Esophagus squamous epithelium (tissue), 5 donors: ENCODE measurements at regions of chr19 and their contacts with region 1.

Region 1: GRCh38 chr19:10574462-10574861 is 5.7 kb upstream of the CDKN2D start:
- DNase-seq: no peak
- H3K4me3 ChIP-seq: no peak overlapping the region
- H3K27ac ChIP-seq: no peak overlapping the region
- H3K4me1 ChIP-seq: peaks cover 2 to 15% (median 9%) of the 10 kb centered on the region in 3 donors
- H3K27me3 ChIP-seq: no peaks in the 10 kb centered on the region
- CTCF ChIP-seq: no peak
- POLR2A ChIP-seq: no peak

Region 2: GRCh38 chr19:10403137-10404021 is 171.1 kb before region 1 on chr19 and contains the start of gene CDC37:
- intact Hi-C with region 1: loop called (anchors 10 kb)
- DNase-seq: peak; percentile 63
- H3K4me3 ChIP-seq: peak within 1 kb of the TSS; percentile 67 to 93 (median 70)
- H3K27ac ChIP-seq: peak within 1 kb of the TSS; percentile 74 to 90 (median 86)
- H3K4me1 ChIP-seq: peaks cover 27 to 92% (median 37%) of the 10 kb centered on the region in 3 donors
- H3K27me3 ChIP-seq: peaks cover 0 to 43% (median 2%) of the 10 kb centered on the region in 4 donors
- CTCF ChIP-seq: no peak
- POLR2A ChIP-seq: peak in 3 of 4 donors; percentile 17 to 86 (median 75)
- total RNA-seq, gene CDC37: 128 to 171 (median 152) TPM

Region 3: DNA sequence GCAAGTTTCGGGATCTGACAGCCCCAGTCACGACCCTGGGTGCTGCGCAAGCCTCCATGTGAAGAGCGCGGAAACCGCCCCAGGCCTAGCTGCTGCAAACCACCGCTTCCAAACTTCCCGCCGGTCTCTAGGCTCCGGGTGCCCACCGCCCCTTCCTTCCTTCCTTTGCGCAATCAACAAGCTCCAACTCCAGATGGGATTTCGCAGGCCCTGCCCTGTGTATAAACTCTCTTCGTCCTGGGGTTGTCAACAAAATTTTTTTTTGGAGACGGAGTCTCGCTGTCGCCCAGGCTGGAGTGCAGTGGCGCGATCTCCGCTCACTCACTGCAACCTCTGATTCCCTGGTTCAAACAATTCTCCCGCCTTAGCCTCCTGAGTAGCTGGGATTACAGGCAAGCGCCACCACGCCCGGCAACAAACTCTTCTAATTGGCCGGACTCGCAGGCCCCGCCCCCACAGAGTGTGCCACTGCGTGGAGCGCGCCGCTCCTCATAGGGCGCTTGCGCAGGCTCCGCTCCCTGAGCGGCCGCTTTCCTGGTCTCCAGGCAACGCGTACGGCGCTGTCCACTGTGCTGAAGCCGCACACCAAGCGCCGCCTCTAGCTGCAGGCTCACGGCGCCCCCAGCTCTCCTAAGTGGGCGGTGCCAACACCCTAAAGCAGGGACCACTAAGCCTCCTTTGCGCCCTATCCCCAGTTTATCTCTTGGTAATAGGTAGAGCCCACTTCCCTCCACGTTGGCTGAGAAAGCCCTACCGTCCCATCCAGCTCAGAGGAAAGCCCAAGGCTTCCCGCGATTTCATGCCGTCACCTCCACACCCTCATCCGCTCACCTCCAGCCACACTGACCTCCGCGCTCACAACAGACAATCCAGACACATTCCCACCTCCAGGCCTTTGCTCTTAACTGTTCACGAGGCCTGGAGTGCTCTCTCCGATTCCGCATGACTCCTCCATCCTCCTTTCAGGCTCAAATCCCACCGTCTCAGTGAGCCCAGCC is 121.2 kb after region 1 on chr19:
- intact Hi-C with region 1: loop called (anchors 10 kb)
- DNase-seq: peak; percentile 43
- H3K4me3 ChIP-seq: peak overlapping the region in 2 of 4 donors; percentile 17 to 44
- H3K27ac ChIP-seq: no peak overlapping the region
- H3K4me1 ChIP-seq: peaks cover 4 to 16% (median 7%) of the 10 kb centered on the region in 3 donors
- H3K27me3 ChIP-seq: no peaks in the 10 kb centered on the region
- CTCF ChIP-seq: no peak
- POLR2A ChIP-seq: no peak